ENCODE measurements at regions of chrX and their contacts with region 1.

Region 1: GRCh38 chrX:155216179-155216939 is at the start of gene VBP1:
- DNase-seq: peak; percentile 92
- H3K4me3 Mint-ChIP-seq: peak within 1 kb of the TSS; percentile 89
- H3K27ac Mint-ChIP-seq: peak within 1 kb of the TSS; percentile 94
- H3K4me1 Mint-ChIP-seq: peaks cover 10% of the 10 kb centered on the region
- H3K27me3 Mint-ChIP-seq: no peaks in the 10 kb centered on the region
- CTCF ChIP-seq: peak; percentile 39
- total RNA-seq, gene VBP1: 60.5 and 62.9 TPM in 2 replicates

Region 2: DNA sequence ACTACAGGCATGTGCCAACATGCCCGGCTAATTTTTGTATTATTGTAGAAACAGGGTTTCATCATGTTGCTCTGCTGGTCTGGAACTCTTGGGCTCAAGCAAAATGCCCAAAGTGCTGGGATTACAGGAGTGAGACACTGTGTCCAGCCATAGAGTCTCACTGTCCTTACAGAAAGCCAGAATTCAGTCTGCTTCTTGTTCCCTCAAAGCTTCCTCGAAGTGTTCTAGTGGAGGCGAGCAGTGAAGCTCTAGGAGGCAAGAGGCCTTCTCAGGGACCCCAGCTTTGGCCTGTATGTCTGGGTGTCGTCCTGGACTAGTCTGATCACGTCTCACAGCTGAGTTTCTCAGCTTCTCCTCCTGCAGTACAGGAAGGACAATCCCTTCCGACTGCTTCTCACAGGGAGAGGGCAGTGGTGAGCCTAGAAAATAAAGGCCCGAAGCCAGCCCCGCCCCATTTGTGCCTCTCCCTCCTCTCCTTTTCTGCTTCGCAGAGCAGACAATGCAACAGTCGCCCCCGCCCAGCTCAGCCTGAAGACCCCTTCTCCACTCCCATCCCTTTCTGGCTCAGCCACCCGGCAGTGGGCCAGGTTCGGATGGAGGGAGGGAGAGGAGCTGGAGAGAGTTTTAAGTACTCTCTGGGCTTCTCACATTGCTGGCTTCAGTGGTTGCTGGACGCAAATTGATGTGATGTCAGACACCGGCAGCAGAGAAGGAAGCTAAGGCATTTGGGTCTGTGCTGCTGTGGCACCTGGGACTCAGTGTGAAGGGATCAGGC is 689.3 kb before region 1 on chrX:
- CTCF ChIA-PET with region 1: no interaction called
- POLR2A ChIA-PET with region 1: no interaction called
- intact Hi-C with region 1: no loop called
- DNase-seq: peak; percentile 84
- H3K4me3 Mint-ChIP-seq: peak overlapping the region; percentile 29
- H3K27ac Mint-ChIP-seq: peak overlapping the region; percentile 88
- H3K4me1 Mint-ChIP-seq: peaks cover 10% of the 10 kb centered on the region
- H3K27me3 Mint-ChIP-seq: no peaks in the 10 kb centered on the region
- CTCF ChIP-seq: peak; percentile 43

Region 3: GRCh38 chrX:154908821-154909220 is 307.5 kb before region 1 on chrX:
- CTCF ChIA-PET with region 1: no interaction called
- POLR2A ChIA-PET with region 1: no interaction called
- intact Hi-C with region 1: no loop called
- DNase-seq: no peak
- H3K4me3 Mint-ChIP-seq: no peak overlapping the region
- H3K27ac Mint-ChIP-seq: no peak overlapping the region
- H3K4me1 Mint-ChIP-seq: no peaks in the 10 kb centered on the region
- H3K27me3 Mint-ChIP-seq: no peaks in the 10 kb centered on the region
- CTCF ChIP-seq: no peak

Region 4: GRCh38 chrX:155263854-155264628 is 47.7 kb after region 1 on chrX and contains the start of gene RAB39B:
- CTCF ChIA-PET with region 1: no interaction called
- POLR2A ChIA-PET with region 1: no interaction called
- intact Hi-C with region 1: loop called (anchors 5 kb)
- DNase-seq: peak; percentile 61
- H3K4me3 Mint-ChIP-seq: no peak within 1 kb of the TSS
- H3K27ac Mint-ChIP-seq: no peak within 1 kb of the TSS
- H3K4me1 Mint-ChIP-seq: no peaks in the 10 kb centered on the region
- H3K27me3 Mint-ChIP-seq: no peaks in the 10 kb centered on the region
- CTCF ChIP-seq: no peak
- total RNA-seq, gene RAB39B: 5.0 and 6.0 TPM in 2 replicates

Region 5: DNA sequence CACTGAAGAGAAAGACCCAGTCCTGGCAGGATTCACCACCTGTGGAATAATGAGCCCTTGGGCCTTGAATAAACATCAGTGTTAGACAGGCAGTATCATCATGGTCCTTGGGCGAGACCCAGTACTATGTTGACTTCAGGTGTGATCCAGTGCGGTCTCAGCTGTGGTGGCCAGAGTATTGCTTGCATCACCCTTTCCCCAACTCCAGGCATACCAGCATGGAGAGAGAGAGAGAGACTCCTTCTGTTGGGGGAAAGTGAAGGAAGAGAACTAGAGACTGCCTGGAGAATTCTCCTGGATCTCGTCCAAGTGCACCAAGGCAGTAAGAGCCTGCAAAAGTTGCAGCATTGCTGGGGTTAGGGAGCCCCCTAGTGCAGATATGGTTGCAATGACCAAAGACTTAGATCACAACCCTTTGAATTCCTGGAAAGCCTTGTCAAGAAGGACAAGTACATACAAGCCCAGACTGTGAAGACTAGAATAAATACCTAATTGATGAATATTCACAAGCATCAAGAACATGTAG is 603.7 kb after region 1 on chrX:
- CTCF ChIA-PET with region 1: no interaction called
- POLR2A ChIA-PET with region 1: no interaction called
- intact Hi-C with region 1: loop called (anchors 1 kb)
- DNase-seq: peak; percentile 91
- H3K4me3 Mint-ChIP-seq: no peak overlapping the region
- H3K27ac Mint-ChIP-seq: no peak overlapping the region
- H3K4me1 Mint-ChIP-seq: peaks cover 6% of the 10 kb centered on the region
- H3K27me3 Mint-ChIP-seq: no peaks in the 10 kb centered on the region
- CTCF ChIP-seq: peak; percentile 61

Region 6: GRCh38 chrX:155857561-155857960 is 641.2 kb after region 1 on chrX:
- CTCF ChIA-PET with region 1: no interaction called
- POLR2A ChIA-PET with region 1: no interaction called
- intact Hi-C with region 1: loop called (anchors 5 kb)
- DNase-seq: peak; percentile 50
- H3K4me3 Mint-ChIP-seq: no peak overlapping the region
- H3K27ac Mint-ChIP-seq: no peak overlapping the region
- H3K4me1 Mint-ChIP-seq: peaks cover 5% of the 10 kb centered on the region
- H3K27me3 Mint-ChIP-seq: no peaks in the 10 kb centered on the region
- CTCF ChIP-seq: peak; percentile 32